H1 (cell line): ENCODE measurements at regions of chr13 and their contacts with region 1.

Region 1: DNA sequence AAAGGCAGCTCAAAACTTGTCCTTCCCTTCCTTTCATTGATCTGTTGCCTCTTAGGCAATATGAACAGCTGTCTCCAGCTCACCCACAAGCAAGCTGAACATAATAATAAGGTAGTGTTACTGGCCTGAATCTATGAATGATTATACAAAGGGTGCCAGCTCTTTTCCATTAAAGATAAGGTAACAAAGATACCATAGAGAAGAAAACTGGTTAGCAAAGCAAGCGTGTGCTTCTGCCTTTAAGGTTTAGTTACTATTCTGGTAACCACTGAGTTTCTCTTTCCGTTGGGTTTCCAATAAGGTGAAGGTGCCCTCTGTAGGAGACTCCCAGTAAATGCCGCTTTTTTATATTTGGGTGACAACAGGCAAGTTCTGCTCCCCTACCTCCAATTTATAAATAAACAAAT is 12.1 kb upstream of the DACH1 start:
- DNase-seq: no peak
- H3K4me3 ChIP-seq: no peak overlapping the region
- H3K27ac ChIP-seq: no peak overlapping the region
- H3K4me1 ChIP-seq: peaks cover 2 to 13% (median 9%) of the 10 kb centered on the region in 4 experiments; a peak in 5 of 7 replicates
- H3K27me3 ChIP-seq: no peaks in the 10 kb centered on the region
- CTCF ChIP-seq: peak in 2 of 3 experiments; percentile 55 to 63; a peak in 3 of 4 replicates
- EP300 ChIP-seq: no peak
- POLR2A ChIP-seq: no peak
- RAD21 ChIP-seq: peak; percentile 80 to 83

Region 2: DNA sequence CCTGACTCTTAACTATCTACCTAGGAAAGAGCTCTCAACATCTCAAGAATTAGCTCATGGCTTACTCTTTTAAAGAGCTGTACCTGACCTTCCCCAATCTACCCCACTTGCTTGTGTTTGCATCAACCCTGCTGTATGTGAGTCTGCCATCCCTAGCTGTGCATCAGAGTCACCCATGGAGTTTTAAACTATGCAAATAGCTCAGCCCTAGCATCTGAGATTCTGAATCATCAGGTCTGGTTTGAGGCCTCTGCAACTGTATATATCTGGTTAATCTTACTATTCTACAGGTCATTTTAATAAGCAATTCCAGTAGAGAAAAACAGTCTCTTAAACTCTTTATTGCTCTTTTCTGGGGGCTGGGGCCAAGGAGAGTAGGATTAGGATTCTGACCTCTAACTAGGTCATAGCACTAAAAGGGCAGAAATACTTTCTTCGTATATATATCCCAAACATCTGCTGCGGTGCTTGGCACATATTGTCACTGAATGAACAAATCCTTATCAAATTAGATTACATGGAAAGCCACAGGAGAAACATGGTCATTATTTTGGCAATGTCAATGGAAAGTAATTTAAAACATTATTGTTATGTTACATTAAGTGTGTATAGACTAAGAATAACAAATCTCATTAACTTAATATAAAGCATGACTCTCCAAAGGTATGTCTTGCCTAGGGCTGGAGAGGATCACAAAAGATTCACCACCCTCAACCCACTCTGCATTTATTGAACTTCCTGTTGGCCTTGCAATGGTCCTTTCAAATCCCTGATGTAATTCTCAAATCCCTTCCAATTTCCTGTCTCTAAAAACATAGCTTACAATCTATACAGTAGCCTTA is 244.3 kb before region 1 on chr13:
- CTCF ChIA-PET with region 1: no interaction called
- POLR2A ChIA-PET with region 1: no interaction called
- DNase-seq: no peak
- H3K4me3 ChIP-seq: no peak overlapping the region
- H3K27ac ChIP-seq: no peak overlapping the region
- H3K4me1 ChIP-seq: peaks cover 0 to 3% (median 0%) of the 10 kb centered on the region in 4 experiments; a peak in 1 of 7 replicates
- H3K27me3 ChIP-seq: no peaks in the 10 kb centered on the region
- CTCF ChIP-seq: no peak
- EP300 ChIP-seq: no peak
- POLR2A ChIP-seq: no peak
- RAD21 ChIP-seq: no peak

Region 3: DNA sequence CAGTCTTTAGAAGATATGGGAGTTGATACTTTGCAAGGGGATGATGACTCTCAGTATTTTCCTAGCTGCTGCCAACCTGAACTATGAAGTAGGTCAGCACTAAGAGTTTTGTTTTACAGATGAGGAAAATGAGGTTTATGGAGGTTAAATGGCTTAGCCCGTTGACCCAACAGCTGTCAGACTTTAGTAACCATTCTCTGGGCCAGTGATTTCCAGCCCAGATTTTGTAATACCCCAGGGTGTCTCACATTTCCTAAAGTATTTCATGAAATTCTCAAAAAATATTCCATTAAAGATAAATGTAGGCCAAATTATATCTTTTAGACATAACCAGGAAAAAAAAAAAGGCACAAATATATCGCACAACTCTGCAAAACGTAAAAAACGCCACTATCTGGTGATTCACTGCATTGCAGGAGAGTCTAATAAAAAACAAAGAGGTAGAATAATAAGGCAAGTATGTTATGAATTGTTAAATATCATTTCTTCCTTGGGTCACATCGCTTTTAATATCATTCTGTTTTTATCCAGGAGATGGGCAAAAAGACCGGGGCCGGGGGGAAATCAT is 124.6 kb before region 1 on chr13:
- CTCF ChIA-PET with region 1: interaction called, 11 read pairs
- POLR2A ChIA-PET with region 1: no interaction called
- DNase-seq: no peak
- H3K4me3 ChIP-seq: no peak overlapping the region
- H3K27ac ChIP-seq: no peak overlapping the region
- H3K4me1 ChIP-seq: peaks cover 0 to 6% (median 2%) of the 10 kb centered on the region in 4 experiments; a peak in 4 of 7 replicates
- H3K27me3 ChIP-seq: peaks cover 0 to 1% (median 0%) of the 10 kb centered on the region in 4 experiments; a peak in 1 of 7 replicates
- CTCF ChIP-seq: peak in 1 of 3 experiments; percentile 31; a peak in 1 of 4 replicates
- EP300 ChIP-seq: no peak
- POLR2A ChIP-seq: no peak
- RAD21 ChIP-seq: peak in 1 of 2 experiments; percentile 19; a peak in 1 of 4 replicates

Region 4: GRCh38 chr13:71867131-71867814 is 11.9 kb before region 1 on chr13 and contains the start of gene DACH1:
- CTCF ChIA-PET with region 1: interaction called, 24 read pairs
- POLR2A ChIA-PET with region 1: interaction called, 5 read pairs
- DNase-seq: peak in 1 of 2 experiments; percentile 59
- H3K4me3 ChIP-seq: peak within 1 kb of the TSS; percentile 65 to 92 (median 74)
- H3K27ac ChIP-seq: no peak within 1 kb of the TSS
- H3K4me1 ChIP-seq: peaks cover 2 to 5% (median 4%) of the 10 kb centered on the region in 4 experiments; a peak in 5 of 7 replicates
- H3K27me3 ChIP-seq: peaks cover 13 to 66% (median 47%) of the 10 kb centered on the region in 4 experiments
- CTCF ChIP-seq: no peak
- EP300 ChIP-seq: no peak
- POLR2A ChIP-seq: no peak
- RAD21 ChIP-seq: no peak
- total RNA-seq, gene DACH1: 0.57 and 0.67 TPM in 2 replicates

Region 5: GRCh38 chr13:72004784-72005374 is 125.7 kb after region 1 on chr13:
- CTCF ChIA-PET with region 1: no interaction called
- POLR2A ChIA-PET with region 1: no interaction called
- DNase-seq: no peak
- H3K4me3 ChIP-seq: no peak overlapping the region
- H3K27ac ChIP-seq: no peak overlapping the region
- H3K4me1 ChIP-seq: no peaks in the 10 kb centered on the region
- H3K27me3 ChIP-seq: no peaks in the 10 kb centered on the region
- CTCF ChIP-seq: no peak
- EP300 ChIP-seq: no peak
- POLR2A ChIP-seq: no peak
- RAD21 ChIP-seq: no peak

Region 6: GRCh38 chr13:72180253-72180952 is 301.3 kb after region 1 on chr13:
- CTCF ChIA-PET with region 1: no interaction called
- POLR2A ChIA-PET with region 1: no interaction called
- DNase-seq: no peak
- H3K4me3 ChIP-seq: no peak overlapping the region
- H3K27ac ChIP-seq: no peak overlapping the region
- H3K4me1 ChIP-seq: no peaks in the 10 kb centered on the region
- H3K27me3 ChIP-seq: no peaks in the 10 kb centered on the region
- CTCF ChIP-seq: peak in 2 of 3 experiments; percentile 10 to 16; a peak in 2 of 4 replicates
- EP300 ChIP-seq: no peak
- POLR2A ChIP-seq: no peak
- RAD21 ChIP-seq: peak; percentile 17 to 22; a peak in 2 of 4 replicates